Naive thymus-derived CD4-positive, alpha-beta T cell (primary cell): ENCODE measurements at regions of chr7 and their contacts with region 1.

Region 1: DNA sequence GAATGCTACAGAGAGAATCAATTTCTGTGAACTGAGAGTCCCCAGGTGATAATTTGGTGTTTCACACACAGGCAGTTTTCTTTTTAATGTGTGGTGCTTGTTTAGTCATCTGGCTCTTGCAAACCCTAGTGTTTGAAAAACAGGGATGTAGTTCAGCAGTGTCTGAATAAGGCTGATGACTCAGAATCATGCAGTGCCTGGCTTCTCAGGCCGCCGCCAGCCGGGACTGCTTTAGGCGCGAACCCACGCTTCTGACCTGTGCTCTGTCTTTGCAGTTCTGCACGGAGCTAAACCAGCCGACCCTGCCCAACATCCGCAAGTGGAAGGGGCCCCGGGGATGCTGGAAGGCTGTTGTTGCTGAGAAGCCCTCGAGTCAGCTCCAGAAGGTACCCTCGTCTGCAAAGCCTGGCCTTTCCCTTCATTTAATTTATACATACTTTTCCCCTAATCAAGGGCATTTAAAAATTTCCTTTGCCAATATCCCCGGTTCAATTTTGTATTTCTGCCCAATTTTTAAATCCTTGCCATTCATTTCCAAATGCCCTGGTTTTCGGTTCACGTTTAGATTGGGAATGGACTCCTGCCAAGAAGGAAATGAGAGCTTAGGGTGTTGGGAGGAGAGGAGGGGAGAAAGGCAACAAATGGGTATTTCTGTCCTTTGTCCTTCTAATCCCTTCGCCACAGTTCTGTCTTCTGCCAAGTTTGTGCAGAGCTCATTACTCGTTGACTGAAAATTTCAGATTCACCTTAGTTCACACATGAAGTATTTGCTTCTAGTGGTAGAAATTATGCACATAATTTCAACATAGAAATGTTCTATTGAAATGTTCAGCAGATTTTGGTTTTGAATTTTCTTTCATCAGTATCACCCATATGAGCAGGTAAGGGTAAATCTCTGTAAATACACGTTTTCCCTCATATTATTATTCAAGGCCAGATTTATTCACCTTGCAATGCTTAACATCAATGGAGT is 108.5 kb upstream of the ANLN start:
- DNase-seq: no peak
- ATAC-seq: peak; percentile 26
- H3K4me3 ChIP-seq: no peak overlapping the region
- H3K4me3 Mint-ChIP-seq: no peak overlapping the region
- H3K27ac ChIP-seq: no peak overlapping the region
- H3K27ac Mint-ChIP-seq: peak overlapping the region in 1 of 9 donors; percentile 34
- H3K4me1 ChIP-seq: peaks cover 18 to 33% of the 10 kb centered on the region in 2 donors
- H3K4me1 Mint-ChIP-seq: peaks cover 21 to 39% (median 31%) of the 10 kb centered on the region in 7 donors
- H3K27me3 ChIP-seq: no peaks in the 10 kb centered on the region
- H3K27me3 Mint-ChIP-seq: peaks cover 0 to 9% (median 0%) of the 10 kb centered on the region in 5 donors

Region 2: GRCh38 chr7:35729061-35729783 is 551.9 kb before region 1 on chr7:
- CTCF ChIA-PET with region 1: no interaction called
- POLR2A ChIA-PET with region 1: no interaction called
- intact Hi-C with region 1: loop called in 1 of 2 experiments (anchors 10 kb)
- DNase-seq: peak in 1 of 9 donors; percentile 37
- ATAC-seq: peak; percentile 79
- H3K4me3 ChIP-seq: no peak overlapping the region
- H3K4me3 Mint-ChIP-seq: peak overlapping the region in 2 of 10 donors; percentile 21 to 53
- H3K27ac ChIP-seq: no peak overlapping the region
- H3K27ac Mint-ChIP-seq: peak overlapping the region in 4 of 9 donors; percentile 26 to 73 (median 45)
- H3K4me1 ChIP-seq: peaks cover 26 to 55% of the 10 kb centered on the region in 2 donors
- H3K4me1 Mint-ChIP-seq: peaks cover 23 to 54% (median 47%) of the 10 kb centered on the region in 7 donors
- H3K27me3 ChIP-seq: no peaks in the 10 kb centered on the region
- H3K27me3 Mint-ChIP-seq: peaks cover 0 to 19% (median 0%) of the 10 kb centered on the region in 5 donors

Region 3: DNA sequence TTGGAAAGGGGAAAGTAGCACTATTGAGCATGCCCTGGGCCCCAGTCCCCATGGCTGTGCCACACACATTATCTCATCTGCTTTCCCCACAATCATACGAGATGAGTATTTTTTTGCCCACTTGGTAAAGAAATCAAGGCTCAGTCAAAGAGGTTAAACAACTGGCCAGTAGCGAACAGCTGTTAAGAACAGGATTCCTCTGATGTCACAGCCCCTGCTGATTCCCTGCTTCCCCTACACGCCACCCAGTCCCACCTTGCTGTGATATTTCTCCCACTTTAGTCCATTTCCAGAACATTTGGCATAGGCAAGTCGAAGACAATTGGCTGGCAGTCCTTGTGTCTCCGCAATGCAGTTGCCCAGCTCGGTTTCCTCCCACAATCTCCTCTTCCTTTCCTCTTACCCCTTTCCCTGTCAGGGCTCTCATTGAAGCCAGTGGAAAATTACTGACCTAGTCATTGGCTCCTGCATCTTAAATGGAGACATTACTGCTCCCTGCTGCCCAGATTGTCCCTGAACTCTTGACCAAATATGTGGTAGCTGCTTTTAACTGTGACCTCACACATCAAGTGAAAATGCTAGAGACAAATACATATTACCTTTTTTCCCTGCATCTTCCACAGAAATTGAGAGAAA is 184.5 kb before region 1 on chr7:
- CTCF ChIA-PET with region 1: no interaction called
- POLR2A ChIA-PET with region 1: no interaction called
- intact Hi-C with region 1: no loop called
- DNase-seq: no peak
- ATAC-seq: no peak
- H3K4me3 ChIP-seq: no peak overlapping the region
- H3K4me3 Mint-ChIP-seq: no peak overlapping the region
- H3K27ac ChIP-seq: no peak overlapping the region
- H3K27ac Mint-ChIP-seq: no peak overlapping the region
- H3K4me1 ChIP-seq: no peaks in the 10 kb centered on the region
- H3K4me1 Mint-ChIP-seq: peaks cover 0 to 1% (median 0%) of the 10 kb centered on the region in 7 donors
- H3K27me3 ChIP-seq: no peaks in the 10 kb centered on the region
- H3K27me3 Mint-ChIP-seq: peaks cover 0 to 5% (median 0%) of the 10 kb centered on the region in 5 donors